ENCODE measurements at regions of chr7 and their contacts with region 1.

Region 1: GRCh38 chr7:19969859-19970498 is 196.6 kb upstream of the TMEM196 start:
- DNase-seq: peak; percentile 79 to 83
- H3K4me3 ChIP-seq: no peak overlapping the region
- H3K4me3 Mint-ChIP-seq: peak overlapping the region; percentile 55
- H3K27ac Mint-ChIP-seq: peak overlapping the region; percentile 86
- H3K4me1 ChIP-seq: peaks cover 44% of the 10 kb centered on the region
- H3K4me1 Mint-ChIP-seq: peaks cover 26% of the 10 kb centered on the region
- H3K27me3 ChIP-seq: no peaks in the 10 kb centered on the region
- H3K27me3 Mint-ChIP-seq: no peaks in the 10 kb centered on the region
- CTCF ChIP-seq: no peak

Region 2: GRCh38 chr7:19026888-19027287 is 943.1 kb before region 1 on chr7:
- CTCF ChIA-PET with region 1: no interaction called
- POLR2A ChIA-PET with region 1: no interaction called
- intact Hi-C with region 1: no loop called
- DNase-seq: no peak
- H3K4me3 ChIP-seq: no peak overlapping the region
- H3K4me3 Mint-ChIP-seq: no peak overlapping the region
- H3K27ac Mint-ChIP-seq: no peak overlapping the region
- H3K4me1 ChIP-seq: no peaks in the 10 kb centered on the region
- H3K4me1 Mint-ChIP-seq: no peaks in the 10 kb centered on the region
- H3K27me3 ChIP-seq: no peaks in the 10 kb centered on the region
- H3K27me3 Mint-ChIP-seq: no peaks in the 10 kb centered on the region
- CTCF ChIP-seq: no peak

Region 3: GRCh38 chr7:19871102-19871501 is 98.9 kb before region 1 on chr7:
- CTCF ChIA-PET with region 1: no interaction called
- POLR2A ChIA-PET with region 1: interaction called, 3 read pairs
- intact Hi-C with region 1: loop called (anchors 1 kb)
- DNase-seq: no peak
- H3K4me3 ChIP-seq: no peak overlapping the region
- H3K4me3 Mint-ChIP-seq: no peak overlapping the region
- H3K27ac Mint-ChIP-seq: no peak overlapping the region
- H3K4me1 ChIP-seq: peaks cover 16% of the 10 kb centered on the region
- H3K4me1 Mint-ChIP-seq: peaks cover 7% of the 10 kb centered on the region
- H3K27me3 ChIP-seq: no peaks in the 10 kb centered on the region
- H3K27me3 Mint-ChIP-seq: no peaks in the 10 kb centered on the region
- CTCF ChIP-seq: no peak

Region 4: GRCh38 chr7:19920705-19921104 is 49.3 kb before region 1 on chr7:
- CTCF ChIA-PET with region 1: no interaction called
- POLR2A ChIA-PET with region 1: no interaction called
- intact Hi-C with region 1: loop called (anchors 1 kb)
- DNase-seq: no peak
- H3K4me3 ChIP-seq: no peak overlapping the region
- H3K4me3 Mint-ChIP-seq: no peak overlapping the region
- H3K27ac Mint-ChIP-seq: no peak overlapping the region
- H3K4me1 ChIP-seq: peaks cover 26% of the 10 kb centered on the region
- H3K4me1 Mint-ChIP-seq: peaks cover 7% of the 10 kb centered on the region
- H3K27me3 ChIP-seq: no peaks in the 10 kb centered on the region
- H3K27me3 Mint-ChIP-seq: no peaks in the 10 kb centered on the region
- CTCF ChIP-seq: no peak

Region 5: GRCh38 chr7:20146451-20146850 is 176.5 kb after region 1 on chr7:
- CTCF ChIA-PET with region 1: no interaction called
- POLR2A ChIA-PET with region 1: no interaction called
- intact Hi-C with region 1: no loop called
- DNase-seq: no peak
- H3K4me3 ChIP-seq: no peak overlapping the region
- H3K4me3 Mint-ChIP-seq: no peak overlapping the region
- H3K27ac Mint-ChIP-seq: no peak overlapping the region
- H3K4me1 ChIP-seq: peaks cover 9% of the 10 kb centered on the region; the same call in 1 of the 2 replicates
- H3K4me1 Mint-ChIP-seq: peaks cover 19% of the 10 kb centered on the region
- H3K27me3 ChIP-seq: no peaks in the 10 kb centered on the region
- H3K27me3 Mint-ChIP-seq: no peaks in the 10 kb centered on the region
- CTCF ChIP-seq: no peak

Region 6: GRCh38 chr7:20197837-20198236 is 227.9 kb after region 1 on chr7:
- CTCF ChIA-PET with region 1: no interaction called
- POLR2A ChIA-PET with region 1: no interaction called
- intact Hi-C with region 1: loop called (anchors 1 kb)
- DNase-seq: no peak
- H3K4me3 ChIP-seq: no peak overlapping the region
- H3K4me3 Mint-ChIP-seq: no peak overlapping the region
- H3K27ac Mint-ChIP-seq: peak overlapping the region; percentile 76
- H3K4me1 ChIP-seq: peaks cover 66% of the 10 kb centered on the region
- H3K4me1 Mint-ChIP-seq: peaks cover 56% of the 10 kb centered on the region
- H3K27me3 ChIP-seq: no peaks in the 10 kb centered on the region
- H3K27me3 Mint-ChIP-seq: no peaks in the 10 kb centered on the region
- CTCF ChIP-seq: peak; percentile 30 to 52

Region 7: GRCh38 chr7:20737840-20738448 is 768.0 kb after region 1 on chr7:
- CTCF ChIA-PET with region 1: no interaction called
- POLR2A ChIA-PET with region 1: no interaction called
- intact Hi-C with region 1: loop called (anchors 5 kb)
- DNase-seq: peak; percentile 63 to 78
- H3K4me3 ChIP-seq: no peak overlapping the region
- H3K4me3 Mint-ChIP-seq: peak overlapping the region; percentile 79
- H3K27ac Mint-ChIP-seq: peak overlapping the region; percentile 90
- H3K4me1 ChIP-seq: peaks cover 65% of the 10 kb centered on the region
- H3K4me1 Mint-ChIP-seq: peaks cover 53% of the 10 kb centered on the region
- H3K27me3 ChIP-seq: no peaks in the 10 kb centered on the region
- H3K27me3 Mint-ChIP-seq: no peaks in the 10 kb centered on the region
- CTCF ChIP-seq: no peak

Measured in Caco-2 (cell line).